ENCODE measurements at regions of chr5 and their contacts with region 1.

Region 1: DNA sequence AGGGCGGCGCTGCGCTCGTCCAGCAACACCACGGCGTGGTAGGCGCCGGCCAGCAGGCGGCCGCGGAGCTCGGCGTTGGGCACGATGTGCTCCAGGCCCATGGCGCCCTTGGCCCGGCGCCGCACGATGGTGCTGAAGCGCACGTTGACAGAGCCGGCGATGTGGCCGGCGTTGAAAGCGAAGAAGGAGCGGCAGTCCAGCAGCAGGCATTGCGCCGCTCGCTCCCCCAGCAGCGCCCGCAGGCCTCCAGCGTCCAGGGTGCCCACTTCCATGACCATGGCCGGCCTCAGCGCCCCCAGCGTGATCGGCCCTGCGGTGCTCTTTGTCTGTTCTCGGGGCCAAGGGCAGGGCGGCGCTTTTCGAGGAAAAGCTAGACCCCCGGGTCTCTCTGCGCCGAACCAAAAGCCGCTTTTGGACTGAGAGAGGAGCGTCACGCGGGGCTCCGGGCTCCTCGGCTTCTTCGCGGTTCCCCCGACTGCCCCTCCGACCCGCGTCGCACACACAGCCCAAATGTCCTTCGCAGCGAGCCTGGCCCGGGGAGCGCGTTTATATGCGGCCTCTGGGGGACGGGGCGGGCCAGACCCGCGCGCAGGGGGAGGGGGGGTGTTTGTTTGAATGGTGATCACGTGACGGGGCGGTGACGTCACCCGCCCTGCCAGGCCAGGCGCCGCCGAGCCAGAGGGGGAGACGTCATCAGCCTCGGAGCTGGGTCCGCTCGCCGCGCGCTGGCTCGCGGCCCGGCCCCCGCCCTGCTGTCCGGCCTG is at the start of gene DUSP1:
- DNase-seq: peak; percentile 95 to 98 (median 98)
- H3K4me3 ChIP-seq: peak within 1 kb of the TSS; percentile 86 to 99 (median 95)
- H3K27ac ChIP-seq: peak within 1 kb of the TSS; percentile 98 to 99
- H3K4me1 ChIP-seq: peaks cover 17 to 81% (median 70%) of the 10 kb centered on the region in 4 experiments
- H3K27me3 ChIP-seq: no peaks in the 10 kb centered on the region

Region 2: GRCh38 chr5:172751766-172752510 is 18.9 kb before region 1 on chr5:
- CTCF ChIA-PET with region 1: interaction called, 19 read pairs
- POLR2A ChIA-PET with region 1: interaction called, 9 read pairs
- DNase-seq: no peak
- H3K4me3 ChIP-seq: peak overlapping the region in 1 of 7 experiments; percentile 25
- H3K27ac ChIP-seq: peak overlapping the region in 1 of 2 experiments; percentile 3
- H3K4me1 ChIP-seq: peaks cover 0 to 29% (median 27%) of the 10 kb centered on the region in 4 experiments
- H3K27me3 ChIP-seq: no peaks in the 10 kb centered on the region

Region 3: GRCh38 chr5:172816901-172817564 is 46.2 kb after region 1 on chr5:
- CTCF ChIA-PET with region 1: no interaction called
- POLR2A ChIA-PET with region 1: no interaction called
- DNase-seq: no peak
- H3K4me3 ChIP-seq: no peak overlapping the region
- H3K27ac ChIP-seq: no peak overlapping the region
- H3K4me1 ChIP-seq: no peaks in the 10 kb centered on the region
- H3K27me3 ChIP-seq: no peaks in the 10 kb centered on the region

Region 4: GRCh38 chr5:172834415-172835289 is 63.8 kb after region 1 on chr5:
- CTCF ChIA-PET with region 1: interaction called, 66 read pairs
- POLR2A ChIA-PET with region 1: interaction called, 37 read pairs
- DNase-seq: peak in 2 of 3 donors; percentile 59 to 67
- H3K4me3 ChIP-seq: peak overlapping the region; percentile 70 to 95 (median 86)
- H3K27ac ChIP-seq: peak overlapping the region; percentile 64 to 82
- H3K4me1 ChIP-seq: peaks cover 14 to 64% (median 57%) of the 10 kb centered on the region in 4 experiments
- H3K27me3 ChIP-seq: no peaks in the 10 kb centered on the region

Region 5: DNA sequence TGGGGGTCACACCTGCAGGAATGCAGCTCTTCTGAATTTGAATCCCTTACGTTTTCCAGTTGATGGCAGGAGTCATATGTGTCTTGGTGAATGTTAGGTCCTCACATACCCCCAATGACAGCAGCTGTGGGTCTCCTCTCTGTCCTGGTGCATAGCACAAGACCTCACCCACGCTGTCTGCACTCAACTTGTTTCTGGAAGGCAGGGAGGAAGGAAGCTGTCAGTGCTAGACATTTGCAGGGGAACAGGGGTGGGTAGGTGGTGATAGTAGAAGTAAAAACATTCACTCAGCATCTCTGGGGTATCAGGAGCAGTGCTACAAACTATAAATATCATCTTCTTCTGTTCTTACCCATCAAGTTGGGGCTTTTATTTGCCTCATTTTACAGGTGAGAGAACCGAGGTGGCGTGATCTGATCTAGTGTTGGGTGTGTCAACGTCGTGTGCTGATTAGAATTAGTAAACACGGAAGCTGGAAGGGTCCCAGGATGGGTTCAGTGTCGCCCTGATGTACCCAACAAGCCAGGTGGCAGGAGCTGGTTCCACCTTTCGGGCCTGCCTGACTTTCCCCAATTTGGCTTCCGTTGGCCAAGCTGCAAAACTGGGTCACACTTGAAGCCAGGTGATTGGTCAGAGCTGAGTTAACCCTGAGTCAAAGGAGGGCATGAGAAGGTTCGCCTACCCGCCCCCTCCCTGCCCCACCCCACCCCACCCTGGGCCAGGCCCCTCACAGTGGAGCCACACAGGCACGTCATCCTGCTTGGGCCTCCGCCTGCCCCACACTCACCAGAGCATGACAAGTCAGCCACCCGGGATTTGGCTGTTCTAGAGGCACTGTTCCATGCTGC is 79.0 kb after region 1 on chr5:
- CTCF ChIA-PET with region 1: interaction called, 12 read pairs
- POLR2A ChIA-PET with region 1: interaction called, 13 read pairs
- DNase-seq: peak in 2 of 3 donors; percentile 46 to 58
- H3K4me3 ChIP-seq: peak overlapping the region in 2 of 7 experiments; percentile 37 to 46
- H3K27ac ChIP-seq: peak overlapping the region in 1 of 2 experiments; percentile 46
- H3K4me1 ChIP-seq: peaks cover 17 to 92% (median 78%) of the 10 kb centered on the region in 4 experiments
- H3K27me3 ChIP-seq: no peaks in the 10 kb centered on the region

Region 6: DNA sequence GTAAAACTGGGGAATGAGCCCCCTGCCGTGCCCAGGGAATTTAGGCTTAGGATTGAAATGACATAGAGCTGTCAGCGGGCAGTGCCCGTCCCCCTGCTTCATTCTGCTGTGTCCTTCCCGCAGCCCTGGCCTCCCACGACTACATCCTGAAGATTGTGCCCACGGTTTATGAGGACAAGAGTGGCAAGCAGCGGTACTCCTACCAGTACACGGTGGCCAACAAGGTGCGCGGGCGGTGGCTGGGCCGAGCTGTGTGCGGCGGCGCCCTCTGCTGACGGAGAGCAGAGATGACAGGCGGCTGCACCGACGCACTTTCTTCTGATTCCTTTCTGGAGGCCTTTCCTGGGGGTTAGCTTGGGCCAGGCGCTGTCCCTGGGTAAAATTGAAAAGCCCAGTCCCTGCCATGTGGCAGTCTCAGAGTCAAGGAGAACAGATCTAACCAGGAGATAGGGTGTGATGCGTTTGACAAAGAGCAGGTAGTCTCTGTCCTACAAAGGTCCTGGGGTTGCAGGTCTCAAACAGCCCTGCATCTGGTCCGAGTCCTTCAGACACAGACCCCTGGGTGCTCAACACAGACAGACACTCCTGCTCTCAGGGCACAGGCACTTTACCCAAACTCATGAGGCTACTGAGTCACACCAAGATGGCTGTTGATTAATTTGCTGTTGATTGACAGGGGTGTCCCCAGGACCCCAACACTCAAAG is 161.6 kb after region 1 on chr5:
- CTCF ChIA-PET with region 1: interaction called, 17 read pairs
- POLR2A ChIA-PET with region 1: interaction called, 7 read pairs
- DNase-seq: peak; percentile 47 to 75 (median 75)
- H3K4me3 ChIP-seq: no peak overlapping the region
- H3K27ac ChIP-seq: no peak overlapping the region
- H3K4me1 ChIP-seq: peaks cover 0 to 7% (median 0%) of the 10 kb centered on the region in 4 experiments
- H3K27me3 ChIP-seq: no peaks in the 10 kb centered on the region

Measured in common myeloid progenitor, CD34-positive (primary cell).